Activated CD4-positive, alpha-beta T cell treated with anti-CD3 and anti-CD28 coated beads for 36 hours (primary cell): ENCODE measurements at regions of chr1 and their contacts with region 1.

Region 1: DNA sequence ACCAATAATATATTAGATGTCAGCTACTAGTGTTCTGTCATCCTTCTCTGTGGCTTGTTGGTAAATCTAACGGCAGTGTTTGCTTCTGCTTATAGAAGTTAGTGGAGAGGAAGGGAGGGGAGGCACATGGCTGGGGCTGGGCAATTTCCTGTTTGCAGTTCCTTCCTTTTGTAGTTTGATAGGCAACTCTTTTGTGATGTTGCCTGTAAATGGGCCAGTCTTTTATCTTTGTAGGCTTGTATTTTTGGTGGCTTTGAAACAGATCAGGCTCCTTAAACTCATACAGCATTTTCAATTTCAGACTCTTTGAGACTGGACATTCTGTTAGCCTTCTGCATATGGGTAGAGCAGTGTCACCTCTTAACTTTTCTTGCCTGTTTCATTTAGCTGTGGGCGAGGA is 48.1 kb downstream of the CDC14A start:
- DNase-seq: peak; percentile 67
- ATAC-seq: peak; percentile 51
- H3K4me3 Mint-ChIP-seq: peak overlapping the region; percentile 60
- H3K27ac Mint-ChIP-seq: peak overlapping the region; percentile 92
- H3K4me1 Mint-ChIP-seq: peaks cover 84% of the 10 kb centered on the region
- H3K27me3 Mint-ChIP-seq: no peaks in the 10 kb centered on the region

Region 2: GRCh38 chr1:100277866-100278265 is 122.5 kb before region 1 on chr1:
- CTCF ChIA-PET with region 1: interaction called, 3 read pairs
- POLR2A ChIA-PET with region 1: interaction called, 10 read pairs
- intact Hi-C with region 1: no loop called
- DNase-seq: peak; percentile 37
- ATAC-seq: peak; percentile 47
- H3K4me3 Mint-ChIP-seq: no peak overlapping the region
- H3K27ac Mint-ChIP-seq: peak overlapping the region; percentile 16
- H3K4me1 Mint-ChIP-seq: peaks cover 13% of the 10 kb centered on the region
- H3K27me3 Mint-ChIP-seq: no peaks in the 10 kb centered on the region

Region 3: GRCh38 chr1:100387209-100387608 is 13.2 kb before region 1 on chr1:
- CTCF ChIA-PET with region 1: interaction called, 11 read pairs
- POLR2A ChIA-PET with region 1: interaction called, 7 read pairs
- intact Hi-C with region 1: no loop called
- DNase-seq: no peak
- ATAC-seq: no peak
- H3K4me3 Mint-ChIP-seq: peak overlapping the region; percentile 66
- H3K27ac Mint-ChIP-seq: peak overlapping the region; percentile 78
- H3K4me1 Mint-ChIP-seq: peaks cover 82% of the 10 kb centered on the region
- H3K27me3 Mint-ChIP-seq: no peaks in the 10 kb centered on the region

Region 4: GRCh38 chr1:100423832-100424337 is 23.5 kb after region 1 on chr1:
- CTCF ChIA-PET with region 1: interaction called, 10 read pairs
- POLR2A ChIA-PET with region 1: interaction called, 4 read pairs
- intact Hi-C with region 1: no loop called
- DNase-seq: peak; percentile 28
- ATAC-seq: peak; percentile 66
- H3K4me3 Mint-ChIP-seq: peak overlapping the region; percentile 50
- H3K27ac Mint-ChIP-seq: peak overlapping the region; percentile 75
- H3K4me1 Mint-ChIP-seq: peaks cover 74% of the 10 kb centered on the region
- H3K27me3 Mint-ChIP-seq: no peaks in the 10 kb centered on the region

Region 5: GRCh38 chr1:100452641-100453040 is 52.2 kb after region 1 on chr1:
- CTCF ChIA-PET with region 1: interaction called, 7 read pairs
- POLR2A ChIA-PET with region 1: interaction called, 4 read pairs
- intact Hi-C with region 1: loop called in 1 of 2 experiments (anchors 2 kb)
- DNase-seq: no peak
- ATAC-seq: peak; percentile 65
- H3K4me3 Mint-ChIP-seq: no peak overlapping the region
- H3K27ac Mint-ChIP-seq: peak overlapping the region; percentile 74
- H3K4me1 Mint-ChIP-seq: peaks cover 81% of the 10 kb centered on the region
- H3K27me3 Mint-ChIP-seq: no peaks in the 10 kb centered on the region

Region 6: DNA sequence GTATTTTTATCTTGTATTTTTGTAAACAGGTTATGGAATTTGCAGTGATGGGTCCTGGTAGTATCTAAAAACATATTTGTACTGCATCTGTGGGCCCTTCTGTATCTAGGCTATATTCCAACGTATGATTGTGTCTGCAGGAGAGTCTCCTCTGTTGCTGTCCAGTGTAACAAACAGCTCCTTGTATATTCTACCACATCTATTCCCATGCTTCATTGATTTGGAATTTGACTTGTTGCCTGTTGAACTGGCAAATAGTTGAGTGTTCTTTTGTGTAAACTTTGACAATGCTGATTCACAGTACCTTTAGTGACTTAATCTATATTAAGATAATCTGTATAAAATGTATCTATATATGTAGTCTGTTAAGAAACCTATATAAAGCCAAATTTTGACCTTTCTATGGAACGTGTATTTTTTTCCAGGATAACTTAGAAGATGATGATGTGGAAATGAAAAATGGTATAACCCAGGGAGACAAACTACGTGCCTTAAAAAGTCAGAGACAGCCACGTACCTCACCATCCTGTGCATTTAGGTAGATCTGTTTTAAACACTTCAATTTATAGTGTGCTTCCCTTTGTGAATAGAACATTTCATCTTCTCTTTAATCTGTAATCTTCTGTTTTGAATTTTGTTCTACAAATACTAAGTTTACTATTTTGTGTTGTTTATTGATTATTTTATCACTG is 94.1 kb after region 1 on chr1:
- CTCF ChIA-PET with region 1: no interaction called
- POLR2A ChIA-PET with region 1: no interaction called
- intact Hi-C with region 1: no loop called
- DNase-seq: no peak
- ATAC-seq: no peak
- H3K4me3 Mint-ChIP-seq: no peak overlapping the region
- H3K27ac Mint-ChIP-seq: no peak overlapping the region
- H3K4me1 Mint-ChIP-seq: no peaks in the 10 kb centered on the region
- H3K27me3 Mint-ChIP-seq: no peaks in the 10 kb centered on the region